Mammary epithelial cell (primary cell): ENCODE measurements at regions of chr2 and their contacts with region 1.

Region 1: GRCh38 chr2:74111380-74111779 is 36.3 kb downstream of the BOLA3 start:
- DNase-seq: no peak
- H3K4me3 ChIP-seq: no peak overlapping the region
- H3K27ac ChIP-seq: no peak overlapping the region
- H3K4me1 ChIP-seq: no peaks in the 10 kb centered on the region
- H3K27me3 ChIP-seq: no peaks in the 10 kb centered on the region
- CTCF ChIP-seq: no peak

Region 2: GRCh38 chr2:74059137-74059775 is 52.1 kb before region 1 on chr2:
- CTCF ChIA-PET with region 1: no interaction called
- dilution Hi-C with region 1: loop called (anchors 5 kb)
- in situ Hi-C with region 1: no loop called
- intact Hi-C with region 1: no loop called
- DNase-seq: no peak
- H3K4me3 ChIP-seq: no peak overlapping the region
- H3K27ac ChIP-seq: no peak overlapping the region
- H3K4me1 ChIP-seq: no peaks in the 10 kb centered on the region
- H3K27me3 ChIP-seq: no peaks in the 10 kb centered on the region
- CTCF ChIP-seq: no peak

Region 3: GRCh38 chr2:74168739-74169138 is 57.4 kb after region 1 on chr2:
- CTCF ChIA-PET with region 1: no interaction called
- dilution Hi-C with region 1: loop called (anchors 5 kb)
- in situ Hi-C with region 1: no loop called
- intact Hi-C with region 1: no loop called
- DNase-seq: no peak
- H3K4me3 ChIP-seq: no peak overlapping the region
- H3K27ac ChIP-seq: no peak overlapping the region
- H3K4me1 ChIP-seq: no peaks in the 10 kb centered on the region
- H3K27me3 ChIP-seq: no peaks in the 10 kb centered on the region
- CTCF ChIP-seq: no peak